ENCODE measurements at regions of chr1 and their contacts with region 1.

Region 1: GRCh38 chr1:37434292-37434907 is 40.0 kb upstream of the ZC3H12A start:
- DNase-seq: peak; percentile 80
- ATAC-seq: peak; percentile 83

Region 2: DNA sequence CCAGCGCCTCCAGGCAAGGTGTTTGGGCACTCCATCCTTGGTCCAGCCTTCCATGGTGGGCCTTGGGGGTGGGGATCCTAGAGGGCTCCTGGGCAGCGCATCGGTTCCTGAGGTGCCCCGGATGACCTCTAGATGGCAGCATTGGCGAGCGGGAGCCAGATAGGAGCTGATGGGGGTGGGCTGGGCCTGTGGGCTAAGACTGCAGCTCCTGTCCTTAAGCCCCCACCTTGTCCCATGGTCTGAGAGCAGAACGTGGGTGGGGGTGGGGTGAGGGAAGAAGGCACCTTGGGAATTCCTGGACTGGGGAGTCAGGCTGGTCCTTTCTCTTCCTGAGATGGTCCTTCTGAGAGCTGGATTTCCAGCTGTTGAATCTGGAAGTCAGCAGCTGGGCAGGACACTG is 858.3 kb before region 1 on chr1:
- intact Hi-C with region 1: loop called (anchors 10 kb)
- DNase-seq: peak; percentile 65
- ATAC-seq: peak; percentile 77

Region 3: GRCh38 chr1:36691374-36691773 is 743.0 kb before region 1 on chr1:
- intact Hi-C with region 1: loop called (anchors 10 kb)
- DNase-seq: no peak
- ATAC-seq: no peak

Measured in left ventricle myocardium superior (tissue), 1 donor.